Posterior vena cava (tissue), 2 donors: ENCODE measurements at regions of chr6 and their contacts with region 1.

Region 1: DNA sequence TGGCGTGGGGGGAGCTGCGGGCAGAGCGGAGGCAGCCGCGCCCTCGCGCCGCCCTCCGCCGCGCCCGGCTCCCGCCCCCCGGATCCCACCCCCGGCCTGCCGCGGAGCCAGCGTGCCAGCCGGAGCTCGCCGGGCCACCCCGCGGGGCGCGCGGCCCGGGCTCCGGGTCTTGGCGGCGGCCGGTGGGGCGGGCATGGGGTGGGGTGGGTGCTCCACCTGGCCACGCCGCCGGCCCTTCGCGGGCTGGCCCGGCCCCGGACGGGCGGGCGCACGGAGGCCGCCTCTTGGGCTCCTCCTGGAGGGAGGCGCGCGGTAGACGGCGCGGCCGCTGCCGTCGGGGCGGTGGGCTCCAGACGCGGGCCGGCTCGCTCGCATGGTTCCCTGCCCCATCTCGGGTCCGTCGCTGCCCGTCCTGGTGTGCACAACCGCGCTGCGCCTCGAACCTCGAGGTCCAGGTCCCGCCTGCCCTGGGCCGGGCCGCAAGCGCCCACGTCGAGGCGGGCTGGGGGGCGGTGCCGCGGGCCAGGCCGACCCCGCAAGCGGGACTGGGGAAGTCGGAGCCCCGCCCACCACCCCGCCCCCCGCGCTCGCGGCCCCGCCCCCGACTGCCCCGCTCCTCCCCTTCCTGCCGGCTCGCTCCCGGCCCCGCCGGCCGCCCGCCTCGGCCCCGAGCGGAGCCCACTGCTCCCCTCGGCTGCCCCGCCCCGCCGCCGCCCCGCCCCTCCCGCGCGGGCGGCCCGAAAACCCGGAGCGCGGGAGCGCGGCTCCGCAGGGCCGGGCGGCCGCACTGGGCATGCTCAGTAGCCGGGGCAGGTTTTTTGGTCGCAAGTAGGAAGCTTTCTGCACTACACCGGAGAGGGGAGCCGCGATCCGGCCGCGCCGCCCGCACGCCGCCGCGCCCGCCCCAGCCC is at the start of gene CDYL:
- DNase-seq: peak; percentile 95
- total RNA-seq, gene CDYL: 38.7 to 38.8 TPM

Region 2: DNA sequence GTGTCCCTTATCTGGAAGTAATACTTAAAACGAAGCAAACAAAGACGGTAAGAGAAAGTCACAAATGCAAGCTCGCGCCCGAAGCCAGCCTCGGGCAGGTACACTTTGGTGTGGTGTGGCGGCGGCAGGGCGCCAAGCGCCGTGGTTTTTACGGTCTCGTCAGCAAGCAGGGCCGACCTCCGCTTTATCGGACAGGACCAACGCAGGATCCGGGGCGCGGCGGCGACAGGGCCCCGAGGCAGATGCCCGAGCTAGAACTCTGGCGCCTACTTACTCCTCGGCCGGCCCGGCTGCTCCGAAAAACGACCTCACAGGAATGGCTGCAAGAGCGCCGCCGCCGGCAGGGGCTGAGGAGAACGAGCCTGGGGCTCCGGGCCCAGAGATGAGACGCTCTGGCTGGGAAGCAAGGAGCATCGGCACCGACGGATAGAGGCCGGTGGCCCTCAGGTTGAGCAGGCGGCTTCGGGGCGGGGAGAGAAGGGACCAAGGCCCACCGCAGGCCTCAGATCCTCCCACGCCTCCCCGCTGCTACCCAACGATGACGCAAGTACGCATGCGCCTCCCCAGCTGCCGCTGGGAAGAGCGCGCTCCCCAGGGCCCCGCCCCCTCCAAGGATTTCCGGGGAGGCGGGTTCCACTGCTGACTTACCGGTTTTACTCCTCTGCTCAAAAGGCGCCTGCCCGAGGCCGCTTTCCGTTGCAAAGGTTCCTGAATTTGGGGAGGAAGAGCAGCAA is 757.5 kb before region 1 on chr6:
- intact Hi-C with region 1: no loop called
- DNase-seq: peak; percentile 98

Region 3: GRCh38 chr6:4647414-4648365 is 128.1 kb before region 1 on chr6:
- intact Hi-C with region 1: loop called in 1 of 2 experiments (anchors 5 kb)
- DNase-seq: peak; percentile 93

Region 4: DNA sequence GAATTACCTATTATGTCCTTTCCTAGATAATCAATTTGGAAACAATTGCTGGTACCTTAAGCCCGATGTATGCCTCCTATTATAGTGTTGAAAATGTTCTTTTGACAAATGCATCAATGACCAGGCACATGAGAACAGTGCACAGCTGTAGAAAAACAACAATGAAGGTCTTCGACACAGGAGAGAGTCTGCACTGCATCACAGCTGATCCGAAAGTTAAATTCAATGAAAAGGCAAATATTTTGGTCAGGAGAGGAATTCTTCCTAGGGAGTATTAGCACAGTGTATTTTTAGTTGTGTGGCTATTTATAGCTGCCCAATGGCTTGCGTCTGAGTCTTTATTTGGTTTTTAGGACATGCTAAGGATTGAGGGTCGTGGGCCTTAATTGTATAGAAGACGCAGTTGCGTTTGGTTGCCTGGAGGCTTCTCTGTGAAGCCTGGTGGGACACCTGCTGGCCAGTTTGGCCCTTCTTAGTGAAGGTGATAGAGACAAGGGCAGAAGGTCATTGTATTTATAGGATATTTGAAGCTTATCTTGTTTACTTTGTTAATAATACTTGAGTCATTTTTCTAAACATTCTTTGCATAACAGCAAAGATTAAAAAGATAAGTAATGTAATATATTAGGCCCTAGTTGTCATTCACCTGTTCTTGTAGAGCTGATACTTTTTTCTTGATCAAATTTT is 72.7 kb after region 1 on chr6:
- intact Hi-C with region 1: no loop called
- DNase-seq: no peak